ENCODE measurements at regions of chr14 and their contacts with region 1.

Region 1: GRCh38 chr14:103562429-103563225 is at the starts of genes BAG5 and COA8:
- DNase-seq: peak; percentile 74
- H3K4me3 Mint-ChIP-seq: peak within 1 kb of the TSS; percentile 93
- H3K27ac Mint-ChIP-seq: peak within 1 kb of the TSS; percentile 85
- H3K4me1 Mint-ChIP-seq: peaks cover 19% of the 10 kb centered on the region
- H3K27me3 Mint-ChIP-seq: no peaks in the 10 kb centered on the region
- CTCF ChIP-seq: no peak
- total RNA-seq, gene BAG5: 30.9 and 35.3 TPM in 2 replicates
- total RNA-seq, gene COA8: 68.9 and 70.8 TPM in 2 replicates

Region 2: GRCh38 chr14:103520657-103521437 is 41.8 kb before region 1 on chr14:
- CTCF ChIA-PET with region 1: interaction called, 10 read pairs
- POLR2A ChIA-PET with region 1: interaction called, 7 read pairs
- intact Hi-C with region 1: no loop called
- DNase-seq: peak; percentile 80
- H3K4me3 Mint-ChIP-seq: peak overlapping the region; percentile 70
- H3K27ac Mint-ChIP-seq: peak overlapping the region; percentile 27
- H3K4me1 Mint-ChIP-seq: peaks cover 14% of the 10 kb centered on the region
- H3K27me3 Mint-ChIP-seq: no peaks in the 10 kb centered on the region
- CTCF ChIP-seq: peak; percentile 39

Region 3: GRCh38 chr14:103539056-103539825 is 23.4 kb before region 1 on chr14:
- CTCF ChIA-PET with region 1: interaction called, 7 read pairs
- POLR2A ChIA-PET with region 1: interaction called, 28 read pairs
- intact Hi-C with region 1: no loop called
- DNase-seq: no peak
- H3K4me3 Mint-ChIP-seq: no peak overlapping the region
- H3K27ac Mint-ChIP-seq: no peak overlapping the region
- H3K4me1 Mint-ChIP-seq: peaks cover 13% of the 10 kb centered on the region
- H3K27me3 Mint-ChIP-seq: no peaks in the 10 kb centered on the region
- CTCF ChIP-seq: no peak

Region 4: GRCh38 chr14:103576371-103577024 is 13.9 kb after region 1 on chr14:
- CTCF ChIA-PET with region 1: interaction called, 4 read pairs
- POLR2A ChIA-PET with region 1: interaction called, 19 read pairs
- intact Hi-C with region 1: no loop called
- DNase-seq: peak; percentile 91
- H3K4me3 Mint-ChIP-seq: peak overlapping the region; percentile 13
- H3K27ac Mint-ChIP-seq: peak overlapping the region; percentile 82
- H3K4me1 Mint-ChIP-seq: peaks cover 17% of the 10 kb centered on the region
- H3K27me3 Mint-ChIP-seq: no peaks in the 10 kb centered on the region
- CTCF ChIP-seq: no peak